ENCODE measurements at regions of chr1 and their contacts with region 1.

Region 1: GRCh38 chr1:202810615-202811295 is at the start of gene PCAT6:
- DNase-seq: peak; percentile 92 to 96 (median 94)
- H3K4me3 ChIP-seq: peak within 1 kb of the TSS; percentile 77
- H3K27ac ChIP-seq: peak within 1 kb of the TSS in 1 of 2 donors; percentile 39
- H3K4me1 ChIP-seq: peaks cover 5% of the 10 kb centered on the region
- H3K27me3 ChIP-seq: no peaks in the 10 kb centered on the region
- CTCF ChIP-seq: no peak
- EP300 ChIP-seq: no peak
- POLR2A ChIP-seq: peak; percentile 68
- total RNA-seq, gene PCAT6: 0.57 to 1.2 (median 1.0) TPM in 5 of 7 donors, not detected in the others

Region 2: GRCh38 chr1:202750758-202751157 is 60.0 kb before region 1 on chr1:
- intact Hi-C with region 1: no loop called
- DNase-seq: no peak
- H3K4me3 ChIP-seq: no peak overlapping the region
- H3K27ac ChIP-seq: no peak overlapping the region
- H3K4me1 ChIP-seq: no peaks in the 10 kb centered on the region
- H3K27me3 ChIP-seq: no peaks in the 10 kb centered on the region
- CTCF ChIP-seq: no peak
- EP300 ChIP-seq: no peak
- POLR2A ChIP-seq: no peak

Region 3: GRCh38 chr1:202786804-202787203 is 24.0 kb before region 1 on chr1:
- intact Hi-C with region 1: no loop called
- DNase-seq: no peak
- H3K4me3 ChIP-seq: no peak overlapping the region
- H3K27ac ChIP-seq: no peak overlapping the region
- H3K4me1 ChIP-seq: peaks cover 12% of the 10 kb centered on the region
- H3K27me3 ChIP-seq: no peaks in the 10 kb centered on the region
- CTCF ChIP-seq: no peak
- EP300 ChIP-seq: no peak
- POLR2A ChIP-seq: no peak

Region 4: DNA sequence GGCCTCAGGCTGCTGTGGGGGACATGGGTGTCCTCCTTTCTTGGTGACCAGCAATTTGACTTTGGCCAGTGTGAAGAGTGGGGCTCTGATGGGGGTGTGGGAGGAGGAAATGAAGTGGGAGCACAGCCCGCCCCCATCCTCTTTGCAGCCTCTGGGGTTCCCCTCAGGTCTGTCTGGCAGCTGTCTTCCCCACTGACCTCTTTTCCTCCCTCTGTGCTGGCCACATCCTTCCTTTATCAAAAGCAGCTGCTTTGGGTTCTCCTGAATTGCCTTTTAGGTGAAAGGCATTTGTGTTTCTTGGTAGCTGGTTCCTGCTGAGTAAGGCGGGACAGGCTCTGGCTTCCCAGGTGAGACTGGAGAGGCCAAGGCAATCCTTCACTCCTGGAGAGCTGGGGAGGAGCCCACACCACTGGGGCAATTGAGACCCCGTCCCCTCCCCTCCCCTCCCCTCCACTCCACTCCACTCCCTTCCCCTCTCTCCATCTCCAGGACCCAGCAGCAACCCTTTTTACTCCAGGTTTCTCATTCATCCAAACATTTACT is 24.9 kb after region 1 on chr1:
- intact Hi-C with region 1: loop called in 1 of 4 experiments (anchors 1 kb)
- DNase-seq: no peak
- H3K4me3 ChIP-seq: no peak overlapping the region
- H3K27ac ChIP-seq: no peak overlapping the region
- H3K4me1 ChIP-seq: no peaks in the 10 kb centered on the region
- H3K27me3 ChIP-seq: no peaks in the 10 kb centered on the region
- CTCF ChIP-seq: no peak
- EP300 ChIP-seq: no peak
- POLR2A ChIP-seq: no peak

Region 5: DNA sequence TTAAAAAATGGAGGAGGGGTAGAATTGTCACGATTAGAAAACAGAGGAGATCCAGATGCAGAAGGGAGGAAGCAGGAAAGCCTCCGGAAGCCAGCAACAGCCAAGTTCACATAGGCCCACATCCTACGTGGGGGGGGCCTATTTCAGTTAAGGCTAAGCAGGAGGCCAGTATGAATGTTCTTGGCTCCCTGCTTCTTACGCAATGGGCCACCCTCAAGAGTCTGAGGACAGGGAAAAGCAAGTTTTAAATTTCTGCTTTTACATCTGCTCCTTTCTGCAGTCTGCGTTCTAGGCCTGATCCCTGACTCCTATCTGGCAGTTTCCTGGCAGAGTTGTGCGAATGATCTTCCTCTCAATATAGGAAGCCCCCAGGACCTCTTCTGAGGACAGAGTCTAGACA is 47.6 kb after region 1 on chr1:
- intact Hi-C with region 1: loop called in 1 of 4 experiments (anchors 5 kb)
- DNase-seq: peak in 4 of 5 donors; percentile 58 to 88 (median 74)
- H3K4me3 ChIP-seq: no peak overlapping the region
- H3K27ac ChIP-seq: peak overlapping the region in 1 of 2 donors; percentile 36
- H3K4me1 ChIP-seq: peaks cover 3% of the 10 kb centered on the region
- H3K27me3 ChIP-seq: no peaks in the 10 kb centered on the region
- CTCF ChIP-seq: no peak
- EP300 ChIP-seq: no peak
- POLR2A ChIP-seq: no peak

Region 6: GRCh38 chr1:202888531-202889360 is 78.0 kb after region 1 on chr1 and contains the start of gene RABIF:
- intact Hi-C with region 1: loop called in 1 of 4 experiments (anchors 10 kb)
- DNase-seq: peak; percentile 95 to 98 (median 95)
- H3K4me3 ChIP-seq: peak within 1 kb of the TSS; percentile 72
- H3K27ac ChIP-seq: peak within 1 kb of the TSS; percentile 63 to 90
- H3K4me1 ChIP-seq: no peaks in the 10 kb centered on the region
- H3K27me3 ChIP-seq: no peaks in the 10 kb centered on the region
- CTCF ChIP-seq: peak in 1 of 3 donors; percentile 37
- EP300 ChIP-seq: no peak
- POLR2A ChIP-seq: peak; percentile 85
- total RNA-seq, gene RABIF: 2.7 to 6.0 (median 3.9) TPM

Region 7: GRCh38 chr1:202957733-202958543 is 147.2 kb after region 1 on chr1 and contains the start of gene ADIPOR1:
- intact Hi-C with region 1: no loop called
- DNase-seq: peak; percentile 88 to 93 (median 91)
- H3K4me3 ChIP-seq: peak within 1 kb of the TSS; percentile 76
- H3K27ac ChIP-seq: peak within 1 kb of the TSS; percentile 89 to 94
- H3K4me1 ChIP-seq: peaks cover 4% of the 10 kb centered on the region
- H3K27me3 ChIP-seq: no peaks in the 10 kb centered on the region
- CTCF ChIP-seq: peak in 2 of 3 donors; percentile 24 to 56
- EP300 ChIP-seq: no peak
- POLR2A ChIP-seq: peak; percentile 94
- total RNA-seq, gene ADIPOR1: 39.7 to 67.9 (median 49.7) TPM